Right cardiac atrium (tissue), 5 donors: ENCODE measurements at regions of chr3 and their contacts with region 1.

Region 1: GRCh38 chr3:65732051-65732935 is 306.4 kb downstream of the MAGI1 start:
- DNase-seq: no peak
- ATAC-seq: peak; percentile 66 to 71
- H3K4me3 ChIP-seq: no peak overlapping the region
- H3K27ac ChIP-seq: no peak overlapping the region
- H3K4me1 ChIP-seq: no peaks in the 10 kb centered on the region
- H3K27me3 ChIP-seq: no peaks in the 10 kb centered on the region

Region 2: GRCh38 chr3:65342084-65342683 is 390.1 kb before region 1 on chr3:
- intact Hi-C with region 1: loop called in 1 of 4 experiments (anchors 10 kb)
- DNase-seq: peak; percentile 48 to 78 (median 75)
- ATAC-seq: peak; percentile 56 to 64
- H3K4me3 ChIP-seq: no peak overlapping the region
- H3K27ac ChIP-seq: no peak overlapping the region
- H3K4me1 ChIP-seq: no peaks in the 10 kb centered on the region
- H3K27me3 ChIP-seq: no peaks in the 10 kb centered on the region

Region 3: DNA sequence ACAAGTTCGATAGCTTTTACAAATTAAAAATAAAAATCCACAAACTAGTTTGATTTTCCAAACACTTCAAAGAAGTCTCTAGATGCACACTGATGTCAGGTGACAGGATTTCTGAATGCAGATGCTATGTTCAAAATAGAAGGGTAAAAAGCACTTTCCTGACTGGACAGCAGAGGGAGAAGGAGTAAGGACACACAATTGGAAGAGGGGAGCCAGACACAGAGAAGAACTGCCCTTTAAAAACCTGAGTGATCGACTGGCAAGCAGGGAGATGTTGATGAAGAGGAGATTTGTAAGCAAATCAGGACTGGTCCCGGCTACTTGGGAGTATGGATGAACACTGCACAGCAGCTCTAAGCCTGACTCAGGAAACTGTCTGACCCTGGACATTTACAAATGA is 306.4 kb before region 1 on chr3:
- intact Hi-C with region 1: loop called in 1 of 4 experiments (anchors 10 kb)
- DNase-seq: no peak
- ATAC-seq: no peak
- H3K4me3 ChIP-seq: no peak overlapping the region
- H3K27ac ChIP-seq: no peak overlapping the region
- H3K4me1 ChIP-seq: no peaks in the 10 kb centered on the region
- H3K27me3 ChIP-seq: no peaks in the 10 kb centered on the region

Region 4: DNA sequence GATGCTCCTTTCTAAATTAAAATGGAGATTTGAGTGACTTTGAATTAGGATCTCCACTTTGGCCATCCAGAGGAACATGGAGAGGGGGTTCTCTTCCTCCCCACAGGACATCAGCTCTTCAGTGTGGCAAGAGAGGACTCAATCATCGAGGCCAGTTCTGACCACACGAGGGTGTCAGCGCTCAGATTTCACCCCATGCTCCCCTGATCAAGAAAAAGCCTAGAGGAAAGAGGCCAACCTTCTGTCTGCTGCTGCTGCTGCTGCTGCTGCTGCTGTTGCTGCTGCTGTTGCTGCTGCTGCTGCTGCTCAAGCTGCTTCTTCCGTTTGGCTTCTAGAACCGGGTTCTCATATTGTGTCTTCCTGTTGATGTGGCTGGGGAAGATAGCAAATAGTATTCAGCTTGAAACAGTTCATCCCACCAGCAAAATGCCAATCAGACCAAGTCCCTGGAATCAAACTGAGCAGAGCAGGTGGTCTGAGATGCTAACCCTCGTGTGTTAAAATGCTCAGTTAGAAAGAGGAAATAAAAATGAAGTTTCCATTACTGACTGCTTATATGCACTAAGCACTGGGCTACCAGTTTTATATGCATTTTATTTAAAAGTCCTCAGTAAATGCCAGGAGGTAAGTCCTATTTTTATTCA is 292.5 kb before region 1 on chr3:
- intact Hi-C with region 1: loop called in 2 of 4 experiments (anchors 5 kb)
- DNase-seq: peak; percentile 44 to 78 (median 68)
- ATAC-seq: peak; percentile 80 to 84
- H3K4me3 ChIP-seq: no peak overlapping the region
- H3K27ac ChIP-seq: no peak overlapping the region
- H3K4me1 ChIP-seq: no peaks in the 10 kb centered on the region
- H3K27me3 ChIP-seq: no peaks in the 10 kb centered on the region